ENCODE measurements at regions of chr14 and their contacts with region 1.

Region 1: DNA sequence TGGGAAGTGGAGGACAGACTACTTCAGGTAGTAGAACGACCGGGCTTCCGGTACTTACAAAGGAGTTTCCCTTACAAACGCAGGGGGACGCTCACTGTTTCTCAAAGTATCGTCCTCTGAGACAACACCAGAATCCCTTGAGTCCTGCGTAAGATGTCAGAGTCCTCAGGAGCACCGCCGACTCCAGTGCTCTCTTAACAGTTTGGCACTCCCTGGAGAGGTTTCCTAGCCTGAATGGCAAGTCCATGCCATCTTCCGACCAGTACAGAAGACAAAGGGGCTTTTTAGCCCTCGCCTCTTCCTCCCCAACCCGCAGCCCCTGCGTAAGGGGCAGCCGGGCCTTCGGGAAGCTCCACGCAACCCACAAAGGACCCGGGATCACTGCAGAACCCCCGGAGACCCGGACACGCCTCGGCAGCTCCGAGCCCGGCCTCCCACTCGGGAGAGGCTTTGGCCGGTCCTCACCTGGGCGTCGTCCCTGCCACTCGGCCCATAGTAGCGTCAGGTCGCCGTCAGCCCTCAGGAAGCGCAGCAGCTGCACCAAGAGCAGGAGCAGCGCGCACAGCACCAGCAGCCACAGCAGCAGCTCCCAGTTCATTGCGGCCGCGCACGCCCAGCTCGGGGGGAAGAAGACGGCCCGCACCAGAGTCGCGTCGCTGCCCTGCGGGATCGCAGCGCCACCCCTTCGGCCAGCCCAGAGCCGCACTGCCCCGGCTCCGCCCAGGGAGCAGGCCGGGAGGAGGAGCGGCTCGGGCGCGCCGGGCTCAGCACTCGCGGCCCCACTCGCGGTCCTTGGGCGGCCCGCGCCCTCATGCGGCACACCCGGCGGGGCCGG is at the start of gene DHRS7:
- ATAC-seq: peak; percentile 93 to 97 (median 96)
- H3K4me3 ChIP-seq: peak within 1 kb of the TSS; percentile 57 to 80 (median 68)
- H3K27ac ChIP-seq: peak within 1 kb of the TSS; percentile 86 to 92
- H3K4me1 ChIP-seq: peaks cover 6 to 8% of the 10 kb centered on the region in 2 donors
- total RNA-seq, gene DHRS7: 29.1 to 75.8 (median 39.5) TPM

Region 2: DNA sequence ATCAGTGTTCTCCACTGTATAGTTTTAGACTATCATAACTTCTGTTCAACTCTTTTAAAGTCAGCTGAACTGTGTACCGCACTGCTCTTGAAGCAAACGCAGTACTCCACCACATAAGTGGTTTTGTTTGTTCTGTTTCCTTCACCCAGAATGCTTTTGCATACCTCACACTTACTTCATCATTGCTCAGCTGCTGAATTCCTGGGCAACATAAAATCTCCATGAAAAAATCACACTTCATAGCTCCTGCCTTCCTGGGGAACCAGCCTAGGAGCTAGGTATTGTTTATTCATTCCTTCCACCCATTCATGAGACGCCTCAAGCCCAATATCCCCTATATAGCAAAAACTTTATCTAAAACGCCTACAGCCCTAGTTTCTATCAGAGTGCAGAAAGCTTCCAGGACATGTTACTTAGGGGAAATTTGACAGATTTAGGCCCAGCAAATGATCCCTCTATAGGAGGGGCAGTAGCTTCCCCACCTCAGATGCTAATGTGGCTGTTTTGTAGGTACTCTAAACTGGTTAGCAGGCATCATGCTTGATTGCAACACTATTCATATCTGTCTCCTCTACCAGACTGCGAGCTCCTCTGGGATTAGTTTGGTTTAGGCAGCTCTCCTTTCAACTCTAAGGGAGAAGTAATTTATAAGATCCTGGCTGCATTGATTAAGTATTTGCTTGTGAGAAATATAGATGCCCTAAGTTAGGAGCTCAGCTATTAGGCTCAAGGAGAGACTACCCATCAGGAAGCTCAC is 200.5 kb before region 1 on chr14:
- in situ Hi-C with region 1: loop called in 1 of 9 experiments (anchors 25 kb)
- ATAC-seq: peak in 7 of 8 experiments; percentile 10 to 93 (median 31)
- H3K4me3 ChIP-seq: no peak overlapping the region
- H3K27ac ChIP-seq: no peak overlapping the region
- H3K4me1 ChIP-seq: no peaks in the 10 kb centered on the region

Region 3: GRCh38 chr14:59997449-59997848 is 167.5 kb before region 1 on chr14:
- in situ Hi-C with region 1: loop called in 1 of 9 experiments (anchors 25 kb)
- ATAC-seq: peak in 4 of 8 experiments; percentile 31 to 95 (median 90)
- H3K4me3 ChIP-seq: no peak overlapping the region
- H3K27ac ChIP-seq: no peak overlapping the region
- H3K4me1 ChIP-seq: no peaks in the 10 kb centered on the region

Region 4: GRCh38 chr14:60064491-60065072 is 100.3 kb before region 1 on chr14:
- in situ Hi-C with region 1: loop called in 2 of 9 experiments (anchors 10 kb)
- ATAC-seq: peak in 3 of 8 experiments; percentile 51 to 56 (median 54)
- H3K4me3 ChIP-seq: no peak overlapping the region
- H3K27ac ChIP-seq: no peak overlapping the region
- H3K4me1 ChIP-seq: peaks cover 0 to 4% of the 10 kb centered on the region in 2 donors

Region 5: GRCh38 chr14:60288279-60288678 is 123.3 kb after region 1 on chr14:
- in situ Hi-C with region 1: no loop called
- ATAC-seq: no peak
- H3K4me3 ChIP-seq: no peak overlapping the region
- H3K27ac ChIP-seq: no peak overlapping the region
- H3K4me1 ChIP-seq: no peaks in the 10 kb centered on the region

Measured in motor neuron (in vitro differentiated cells).